PC-3 (cell line): ENCODE measurements at regions of chr5 and their contacts with region 1.

Region 1: GRCh38 chr5:36414869-36415282 is 113.2 kb upstream of the RANBP3L start:
- DNase-seq: peak; percentile 88
- ATAC-seq: peak; percentile 70
- H3K4me3 ChIP-seq: no peak overlapping the region
- H3K27ac ChIP-seq: no peak overlapping the region
- H3K4me1 ChIP-seq: peaks cover 30% of the 10 kb centered on the region
- H3K27me3 ChIP-seq: no peaks in the 10 kb centered on the region
- CTCF ChIP-seq: peak; percentile 73

Region 2: DNA sequence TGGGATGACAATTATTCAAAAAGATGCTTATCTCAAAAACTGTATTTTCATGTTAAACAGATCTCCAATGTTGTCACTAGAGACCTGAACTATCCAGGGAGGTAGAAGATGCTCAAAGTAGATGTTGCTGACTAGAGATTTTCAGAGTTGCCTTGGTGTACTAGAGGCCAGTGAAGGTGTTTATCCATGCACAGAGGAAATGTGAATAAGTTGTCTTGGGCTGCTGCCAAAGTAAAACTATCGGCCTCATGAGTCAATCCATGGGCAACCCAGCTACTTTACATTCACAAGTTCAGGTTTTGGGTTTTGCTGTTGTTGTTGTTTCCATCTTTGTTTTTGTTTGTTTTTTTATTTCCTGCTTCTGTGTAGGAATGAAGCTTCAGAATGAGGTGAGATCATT is 27.9 kb after region 1 on chr5:
- CTCF ChIA-PET with region 1: no interaction called
- POLR2A ChIA-PET with region 1: no interaction called
- intact Hi-C with region 1: no loop called
- DNase-seq: peak; percentile 86
- ATAC-seq: peak; percentile 44; the same call in 1 of the 2 replicates
- H3K4me3 ChIP-seq: no peak overlapping the region
- H3K27ac ChIP-seq: no peak overlapping the region
- H3K4me1 ChIP-seq: peaks cover 32% of the 10 kb centered on the region
- H3K27me3 ChIP-seq: no peaks in the 10 kb centered on the region
- CTCF ChIP-seq: no peak

Region 3: DNA sequence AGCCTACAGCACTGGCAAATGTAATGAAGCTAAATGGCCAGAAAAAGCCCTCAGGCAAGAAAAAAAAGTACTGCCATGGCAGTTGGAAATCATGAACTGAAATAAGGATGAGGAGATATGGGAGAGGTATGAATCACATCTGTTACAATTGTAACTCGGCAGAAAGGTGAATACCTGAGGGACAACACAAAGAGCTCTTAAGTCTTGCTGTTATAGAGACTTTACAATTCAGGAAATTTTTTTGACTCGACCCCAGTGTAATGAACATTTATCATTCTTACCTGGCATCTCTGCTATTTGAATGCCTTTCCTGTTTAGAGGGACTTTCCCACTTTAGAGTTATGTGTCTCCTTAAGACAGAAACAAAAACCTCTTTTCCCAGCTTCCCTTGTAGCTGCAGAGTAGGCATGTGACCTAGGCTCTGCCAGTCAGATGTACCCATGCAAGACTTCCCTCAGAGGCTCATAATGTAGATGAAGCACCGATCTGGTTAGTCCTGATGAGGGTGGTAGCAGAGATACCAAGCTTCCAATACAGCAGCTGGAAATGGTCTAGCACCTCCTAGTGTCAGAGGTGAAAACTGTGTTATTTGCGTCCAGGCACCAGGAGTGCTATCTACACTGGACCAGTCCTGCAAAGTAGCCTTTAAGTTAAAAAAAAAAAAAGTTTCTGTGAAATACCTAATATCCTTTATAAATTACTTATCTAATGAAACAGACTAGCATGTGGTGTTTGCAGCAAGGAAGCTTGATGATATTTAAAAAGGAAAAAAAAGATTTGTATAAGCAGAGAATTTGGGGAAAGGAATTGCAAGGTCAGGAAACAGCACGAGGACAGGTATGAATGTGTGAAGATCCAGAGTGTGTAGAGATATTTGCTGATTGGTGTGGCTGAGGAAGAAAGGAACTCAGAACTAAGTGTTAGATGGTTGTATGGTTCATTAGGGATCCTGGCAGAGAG is 44.6 kb after region 1 on chr5:
- CTCF ChIA-PET with region 1: interaction called, 16 read pairs
- POLR2A ChIA-PET with region 1: no interaction called
- intact Hi-C with region 1: loop called (anchors 5 kb)
- DNase-seq: peak; percentile 83
- ATAC-seq: peak; percentile 29; the same call in 1 of the 2 replicates
- H3K4me3 ChIP-seq: no peak overlapping the region
- H3K27ac ChIP-seq: peak overlapping the region; percentile 39
- H3K4me1 ChIP-seq: peaks cover 26% of the 10 kb centered on the region
- H3K27me3 ChIP-seq: no peaks in the 10 kb centered on the region
- CTCF ChIP-seq: peak; percentile 67

Region 4: DNA sequence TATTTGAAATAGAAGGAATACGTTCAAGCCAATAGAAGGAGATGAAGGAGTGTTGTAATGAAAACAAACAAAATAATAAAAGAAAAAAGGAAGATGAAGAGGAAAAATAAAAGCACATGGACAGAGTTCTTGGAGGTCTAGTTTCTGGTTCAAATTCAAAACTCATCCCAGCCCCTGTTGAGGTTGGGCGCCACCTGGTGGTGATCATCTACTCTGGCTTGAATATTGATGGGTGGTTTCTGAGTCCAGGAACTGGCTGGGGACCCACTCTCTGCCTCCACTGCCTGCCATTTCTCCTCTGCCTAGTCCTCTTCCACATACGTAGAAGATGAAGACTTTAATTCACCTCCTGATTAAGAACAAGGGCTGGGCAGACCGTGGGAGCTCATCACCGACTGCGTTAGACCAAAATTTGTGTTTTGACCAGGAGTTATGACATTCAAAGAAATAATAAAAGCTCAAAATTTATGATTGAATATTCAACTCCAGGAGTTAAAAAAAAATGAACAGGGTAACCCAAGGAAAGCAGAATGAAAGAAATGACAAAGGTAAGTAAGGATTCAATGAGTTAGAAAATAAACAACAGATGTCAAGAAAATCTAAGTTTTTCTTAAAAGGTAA is 92.6 kb after region 1 on chr5:
- CTCF ChIA-PET with region 1: interaction called, 30 read pairs
- POLR2A ChIA-PET with region 1: no interaction called
- intact Hi-C with region 1: loop called (anchors 1 kb)
- DNase-seq: peak; percentile 86
- ATAC-seq: peak; percentile 39
- H3K4me3 ChIP-seq: no peak overlapping the region
- H3K27ac ChIP-seq: no peak overlapping the region
- H3K4me1 ChIP-seq: peaks cover 18% of the 10 kb centered on the region
- H3K27me3 ChIP-seq: no peaks in the 10 kb centered on the region
- CTCF ChIP-seq: peak; percentile 93

Region 5: GRCh38 chr5:36606428-36607113 is 191.7 kb after region 1 on chr5 and contains the start of gene SLC1A3:
- CTCF ChIA-PET with region 1: interaction called, 4 read pairs
- POLR2A ChIA-PET with region 1: no interaction called
- intact Hi-C with region 1: loop called (anchors 5 kb)
- DNase-seq: peak; percentile 80
- ATAC-seq: peak; percentile 97
- H3K4me3 ChIP-seq: peak within 1 kb of the TSS; percentile 85
- H3K27ac ChIP-seq: peak within 1 kb of the TSS; percentile 66
- H3K4me1 ChIP-seq: peaks cover 15% of the 10 kb centered on the region
- H3K27me3 ChIP-seq: peaks cover 26% of the 10 kb centered on the region
- CTCF ChIP-seq: no peak
- total RNA-seq, gene SLC1A3: 23.2 and 24.7 TPM in 2 replicates

Region 6: DNA sequence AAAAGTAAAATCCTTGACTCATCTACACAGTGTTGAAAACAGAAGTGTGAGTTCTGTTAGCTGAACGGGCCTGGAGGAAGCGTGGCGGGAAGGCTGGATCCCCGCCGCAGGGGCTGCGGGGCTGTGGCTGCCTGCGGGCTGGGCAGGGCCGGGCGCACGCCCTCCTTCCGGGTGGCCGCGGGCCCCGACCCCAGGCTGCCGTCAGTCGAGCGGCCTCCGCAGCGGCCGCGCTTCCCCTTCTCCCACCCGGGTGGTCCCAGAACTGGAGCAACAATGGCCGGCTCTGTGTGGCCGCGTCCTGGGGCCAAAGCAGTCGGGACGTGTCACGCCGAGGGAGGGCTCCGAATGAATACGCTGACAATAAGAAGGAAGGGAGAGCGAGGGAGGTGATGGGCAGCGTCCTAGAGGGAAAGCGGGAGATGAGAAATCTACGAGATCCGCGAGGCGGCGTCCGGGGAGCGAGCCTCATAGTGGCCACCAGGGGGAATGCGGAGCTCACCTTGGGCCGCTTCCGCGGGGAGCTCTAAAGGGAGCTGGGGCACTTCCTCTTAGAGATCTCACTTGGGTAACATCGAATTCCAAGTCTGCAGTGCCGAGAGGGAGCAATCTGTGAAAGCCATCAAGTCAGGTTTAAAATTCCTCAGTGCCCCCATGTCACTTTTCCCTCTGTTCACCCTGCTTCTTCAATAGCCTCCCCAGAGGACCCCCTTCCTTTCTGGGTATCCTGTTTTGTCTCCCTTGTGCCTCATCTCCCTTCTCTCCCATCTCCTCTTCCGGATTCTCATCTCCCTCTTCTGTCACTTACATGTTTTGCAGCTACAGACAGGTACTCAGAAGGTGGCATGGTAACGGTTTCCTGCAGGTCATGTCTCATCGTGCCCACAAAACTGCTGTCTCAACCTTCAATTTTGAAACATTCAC is 275.4 kb after region 1 on chr5:
- CTCF ChIA-PET with region 1: interaction called, 31 read pairs
- POLR2A ChIA-PET with region 1: no interaction called
- intact Hi-C with region 1: no loop called
- DNase-seq: peak; percentile 92
- ATAC-seq: peak; percentile 93
- H3K4me3 ChIP-seq: peak overlapping the region; percentile 84
- H3K27ac ChIP-seq: peak overlapping the region; percentile 41
- H3K4me1 ChIP-seq: peaks cover 8% of the 10 kb centered on the region; the same call in 1 of the 2 replicates
- H3K27me3 ChIP-seq: no peaks in the 10 kb centered on the region
- CTCF ChIP-seq: peak; percentile 76

Region 7: GRCh38 chr5:36695677-36696673 is 281.1 kb after region 1 on chr5:
- CTCF ChIA-PET with region 1: interaction called, 31 read pairs
- POLR2A ChIA-PET with region 1: no interaction called
- intact Hi-C with region 1: loop called (anchors 1 kb)
- DNase-seq: peak; percentile 86
- ATAC-seq: peak; percentile 78
- H3K4me3 ChIP-seq: no peak overlapping the region
- H3K27ac ChIP-seq: no peak overlapping the region
- H3K4me1 ChIP-seq: no peaks in the 10 kb centered on the region
- H3K27me3 ChIP-seq: peaks cover 11% of the 10 kb centered on the region
- CTCF ChIP-seq: peak; percentile 90